Activated CD4-positive, alpha-beta memory T cell treated with anti-CD3 and anti-CD28 coated beads, Interleukin-2, amount 10 ng/mL, durations not matched to agents 7 days and 5 days (primary cell): ENCODE measurements at regions of chr11 and their contacts with region 1.

Region 1: DNA sequence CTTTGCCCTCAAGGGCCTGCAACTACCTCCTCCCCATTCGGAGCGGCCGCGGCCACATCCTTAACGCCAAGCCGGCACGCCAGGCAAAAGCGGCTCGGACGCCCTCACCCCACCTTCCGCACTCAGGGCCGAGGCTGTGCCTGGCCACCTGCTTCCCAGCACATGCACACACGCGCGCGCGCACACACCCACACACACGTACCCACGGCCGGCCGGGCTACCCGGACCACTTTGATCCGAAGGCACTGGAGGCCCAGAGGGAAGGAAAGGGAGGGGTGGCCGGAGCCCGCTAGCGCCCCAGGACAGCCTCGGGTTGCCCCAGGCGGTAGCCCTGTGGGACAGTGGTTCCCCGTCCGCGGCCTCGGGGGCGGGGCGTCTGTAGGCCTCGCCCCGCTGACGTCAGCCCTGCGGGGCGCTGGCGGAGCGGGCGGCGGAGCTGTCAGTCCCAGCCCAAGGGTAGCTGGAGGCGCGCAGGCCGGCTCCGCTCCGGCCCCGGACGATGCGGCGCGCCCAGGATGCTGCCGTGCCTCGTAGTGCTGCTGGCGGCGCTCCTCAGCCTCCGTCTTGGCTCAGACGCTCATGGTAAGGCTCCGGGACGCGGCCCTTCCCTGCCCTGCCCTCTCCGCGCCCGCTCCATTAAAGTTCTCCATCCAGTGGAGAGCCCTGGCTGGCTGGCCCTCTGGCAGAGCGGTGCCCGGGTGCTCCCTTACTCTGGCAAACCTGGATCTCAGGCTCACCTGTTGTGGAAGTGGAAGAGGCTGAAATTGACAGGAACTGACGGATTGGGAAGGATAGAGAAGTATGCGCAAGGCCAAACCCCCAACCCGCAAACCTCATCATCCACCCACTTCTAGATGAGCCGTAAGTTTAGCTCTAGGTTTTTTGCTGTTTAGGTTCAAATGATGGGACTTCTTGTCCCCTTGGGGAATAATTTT is at the start of gene IL10RA:
- DNase-seq: peak; percentile 90
- H3K4me3 Mint-ChIP-seq: peak within 1 kb of the TSS; percentile 89
- H3K27ac Mint-ChIP-seq: peak within 1 kb of the TSS; percentile 85
- H3K4me1 Mint-ChIP-seq: peaks cover 61% of the 10 kb centered on the region
- H3K27me3 Mint-ChIP-seq: no peaks in the 10 kb centered on the region
- total RNA-seq, gene IL10RA: 286 to 291 TPM

Region 2: GRCh38 chr11:117959438-117960149 is 26.6 kb before region 1 on chr11:
- CTCF ChIA-PET with region 1: interaction called, 170 read pairs
- POLR2A ChIA-PET with region 1: interaction called, 878 read pairs
- DNase-seq: no peak
- H3K4me3 Mint-ChIP-seq: peak overlapping the region; percentile 36
- H3K27ac Mint-ChIP-seq: peak overlapping the region; percentile 82
- H3K4me1 Mint-ChIP-seq: peaks cover 38% of the 10 kb centered on the region
- H3K27me3 Mint-ChIP-seq: no peaks in the 10 kb centered on the region

Region 3: GRCh38 chr11:117970400-117971024 is 15.7 kb before region 1 on chr11:
- CTCF ChIA-PET with region 1: interaction called, 3 read pairs
- POLR2A ChIA-PET with region 1: interaction called, 1,195 read pairs
- DNase-seq: peak; percentile 58
- H3K4me3 Mint-ChIP-seq: peak overlapping the region; percentile 29
- H3K27ac Mint-ChIP-seq: peak overlapping the region; percentile 70
- H3K4me1 Mint-ChIP-seq: peaks cover 62% of the 10 kb centered on the region
- H3K27me3 Mint-ChIP-seq: no peaks in the 10 kb centered on the region

Region 4: GRCh38 chr11:118002541-118003423 is 16.6 kb after region 1 on chr11:
- CTCF ChIA-PET with region 1: interaction called, 43 read pairs
- POLR2A ChIA-PET with region 1: interaction called, 1,195 read pairs
- DNase-seq: peak; percentile 73
- H3K4me3 Mint-ChIP-seq: peak overlapping the region; percentile 58
- H3K27ac Mint-ChIP-seq: peak overlapping the region; percentile 99
- H3K4me1 Mint-ChIP-seq: peaks cover 100% of the 10 kb centered on the region
- H3K27me3 Mint-ChIP-seq: no peaks in the 10 kb centered on the region

Region 5: GRCh38 chr11:118010738-118011461 is 24.7 kb after region 1 on chr11:
- CTCF ChIA-PET with region 1: interaction called, 6 read pairs
- POLR2A ChIA-PET with region 1: interaction called, 1,195 read pairs
- DNase-seq: no peak
- H3K4me3 Mint-ChIP-seq: no peak overlapping the region
- H3K27ac Mint-ChIP-seq: no peak overlapping the region
- H3K4me1 Mint-ChIP-seq: peaks cover 98% of the 10 kb centered on the region
- H3K27me3 Mint-ChIP-seq: no peaks in the 10 kb centered on the region

Region 6: DNA sequence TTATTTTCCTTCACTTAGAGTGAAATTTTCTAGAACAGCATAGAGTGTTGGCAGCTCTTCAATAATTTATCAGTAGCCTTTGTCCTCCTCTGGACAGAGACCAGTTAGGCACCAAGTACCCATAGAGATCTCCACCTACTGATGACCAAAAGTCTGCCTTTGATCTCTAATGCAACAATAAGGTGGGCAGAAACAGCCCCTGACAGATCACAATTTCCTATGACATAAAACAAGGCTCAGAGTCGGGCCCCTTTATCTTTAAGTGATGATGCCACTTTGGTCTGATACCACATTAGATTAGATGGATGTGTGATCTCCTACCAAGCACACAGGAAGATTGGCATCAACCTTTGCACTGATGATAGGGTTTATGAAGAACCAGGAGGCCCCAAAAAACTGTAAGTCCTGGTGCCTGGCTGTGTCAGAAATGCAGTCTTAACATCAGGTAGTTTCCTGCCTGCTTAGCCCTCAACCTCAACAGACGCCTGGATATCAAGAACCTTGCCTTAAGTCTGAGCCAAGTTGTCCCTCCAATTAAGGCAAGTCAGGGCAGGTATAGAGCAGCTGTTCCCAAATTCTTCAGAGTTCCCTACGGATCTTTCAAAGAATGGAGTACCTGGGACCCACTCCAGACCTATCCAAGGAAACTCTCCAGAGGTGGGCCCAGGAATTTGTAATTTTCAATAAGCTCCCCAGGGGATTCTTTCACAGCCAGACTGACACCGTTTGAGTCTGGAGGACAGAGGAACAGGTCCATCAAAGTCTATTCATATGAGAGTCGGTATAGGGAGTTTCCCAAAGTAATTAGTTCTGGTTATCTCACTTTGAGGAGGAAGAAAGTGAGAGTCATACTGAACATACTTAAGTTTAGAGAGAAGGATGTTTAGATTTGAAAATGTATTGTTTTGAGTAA is 60.1 kb after region 1 on chr11:
- CTCF ChIA-PET with region 1: interaction called, 192 read pairs
- POLR2A ChIA-PET with region 1: interaction called, 681 read pairs
- DNase-seq: peak; percentile 44
- H3K4me3 Mint-ChIP-seq: no peak overlapping the region
- H3K27ac Mint-ChIP-seq: peak overlapping the region; percentile 78
- H3K4me1 Mint-ChIP-seq: peaks cover 90% of the 10 kb centered on the region
- H3K27me3 Mint-ChIP-seq: no peaks in the 10 kb centered on the region

Region 7: DNA sequence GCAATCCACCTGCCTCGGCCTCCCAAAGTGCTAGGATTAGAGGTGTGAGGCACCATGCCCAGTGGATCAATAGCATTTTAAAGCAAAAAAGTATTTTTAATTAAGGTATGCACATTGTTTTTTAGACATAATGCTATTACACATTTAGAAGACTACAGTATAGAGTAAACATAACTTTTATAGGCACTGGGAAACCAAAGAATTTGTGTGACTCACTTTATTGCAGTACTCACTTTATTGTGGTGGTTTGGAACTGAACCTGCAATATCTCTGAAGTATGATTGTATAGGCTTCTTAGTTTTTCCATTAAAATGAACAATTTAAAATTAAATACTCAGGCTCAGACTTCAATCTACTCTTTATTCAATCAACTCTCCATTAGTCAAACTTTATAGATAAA is 300.8 kb after region 1 on chr11:
- CTCF ChIA-PET with region 1: no interaction called
- POLR2A ChIA-PET with region 1: no interaction called
- DNase-seq: no peak
- H3K4me3 Mint-ChIP-seq: no peak overlapping the region
- H3K27ac Mint-ChIP-seq: no peak overlapping the region
- H3K4me1 Mint-ChIP-seq: peaks cover 30% of the 10 kb centered on the region
- H3K27me3 Mint-ChIP-seq: peaks cover 3% of the 10 kb centered on the region